ENCODE measurements at regions of chr2 and their contacts with region 1.

Region 1: GRCh38 chr2:37231241-37232130 is at the starts of genes CEBPZ and NDUFAF7:
- DNase-seq: peak; percentile 86 to 90
- ATAC-seq: peak; percentile 99
- H3K4me3 ChIP-seq: peak within 1 kb of the TSS; percentile 80 to 97 (median 87)
- H3K27ac ChIP-seq: peak within 1 kb of the TSS; percentile 91 to 98 (median 94)
- H3K4me1 ChIP-seq: peaks cover 29 to 31% of the 10 kb centered on the region in 2 donors
- H3K27me3 ChIP-seq: no peaks in the 10 kb centered on the region
- CTCF ChIP-seq: peak in 2 of 5 experiments; percentile 11 to 20
- POLR2A ChIP-seq: peak; percentile 68 to 71
- total RNA-seq, gene CEBPZ: 43.2 to 75.0 (median 51.9) TPM
- total RNA-seq, gene NDUFAF7: 13.7 to 24.0 (median 19.9) TPM

Region 2: GRCh38 chr2:36966370-36967235 is 264.9 kb before region 1 on chr2 and contains the start of gene STRN:
- in situ Hi-C with region 1: no loop called
- intact Hi-C with region 1: loop called (anchors 5 kb)
- DNase-seq: peak; percentile 90 to 96
- ATAC-seq: peak; percentile 88 to 91
- H3K4me3 ChIP-seq: peak within 1 kb of the TSS; percentile 70 to 97 (median 88)
- H3K27ac ChIP-seq: peak within 1 kb of the TSS; percentile 81 to 97 (median 90)
- H3K4me1 ChIP-seq: peaks cover 28% of the 10 kb centered on the region in 2 donors
- H3K27me3 ChIP-seq: no peaks in the 10 kb centered on the region
- CTCF ChIP-seq: peak in 1 of 5 experiments; percentile 32
- POLR2A ChIP-seq: peak; percentile 94 to 98
- total RNA-seq, gene STRN: 21.3 to 52.0 (median 38.5) TPM

Region 3: DNA sequence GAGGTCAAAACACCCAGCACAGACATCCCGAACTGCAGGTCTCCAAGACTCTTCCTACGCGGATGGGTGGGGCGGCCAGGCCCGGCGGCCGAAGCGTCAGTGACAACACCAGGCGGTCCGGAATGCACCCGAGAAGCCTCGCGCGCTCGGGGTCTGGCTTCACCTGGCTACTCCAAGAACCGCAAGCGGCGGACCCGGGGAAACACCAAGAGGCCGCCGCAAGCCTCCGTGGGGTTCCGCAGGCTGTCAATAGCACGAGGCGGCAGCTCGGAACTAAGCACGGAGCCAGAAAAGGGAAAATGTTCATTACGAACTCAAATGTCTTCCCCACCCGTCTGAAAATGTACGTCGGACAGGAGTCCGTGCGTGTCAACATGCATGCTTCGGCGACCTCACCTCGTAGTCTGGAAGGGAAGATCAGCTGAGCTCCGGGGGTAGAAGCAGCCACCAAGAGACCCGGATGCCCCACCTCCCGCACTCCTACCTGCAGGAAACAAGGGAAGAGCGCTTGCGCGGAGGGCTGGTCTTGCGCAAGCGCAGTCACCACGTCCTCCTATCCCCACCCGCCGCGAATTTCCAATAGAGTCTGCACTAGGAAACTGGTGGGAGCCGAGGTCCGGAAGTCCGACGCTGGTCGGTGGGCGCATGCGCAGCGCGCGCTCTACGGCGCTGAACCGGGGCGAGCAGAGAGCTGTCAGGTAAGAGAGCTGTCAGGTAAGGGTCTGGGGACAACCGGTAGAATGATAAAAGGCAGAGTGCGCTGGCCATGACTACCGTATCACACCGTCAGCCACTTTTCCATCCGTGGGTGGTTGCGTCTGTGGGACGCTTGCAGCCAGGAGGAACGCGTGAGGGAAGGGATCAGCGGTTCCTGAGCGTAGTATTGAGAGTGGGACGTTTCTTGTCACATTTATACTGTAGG is 147.4 kb before region 1 on chr2 and contains the starts of genes GPATCH11 and HEATR5B:
- in situ Hi-C with region 1: no loop called
- intact Hi-C with region 1: loop called (anchors 5 kb)
- DNase-seq: peak; percentile 95 to 96
- ATAC-seq: peak; percentile 99
- H3K4me3 ChIP-seq: peak within 1 kb of the TSS; percentile 65 to 96 (median 90)
- H3K27ac ChIP-seq: peak within 1 kb of the TSS; percentile 83 to 91 (median 84)
- H3K4me1 ChIP-seq: peaks cover 28 to 33% of the 10 kb centered on the region in 2 donors
- H3K27me3 ChIP-seq: no peaks in the 10 kb centered on the region
- CTCF ChIP-seq: no peak
- POLR2A ChIP-seq: peak; percentile 55
- total RNA-seq, gene GPATCH11: 2.5 to 3.7 (median 3.0) TPM
- total RNA-seq, gene HEATR5B: 6.8 to 10.0 (median 9.8) TPM

Region 4: GRCh38 chr2:37196320-37197195 is 34.9 kb before region 1 on chr2 and contains the start of gene CEBPZOS:
- in situ Hi-C with region 1: no loop called
- intact Hi-C with region 1: loop called (anchors 2 kb)
- DNase-seq: peak; percentile 63 to 76
- ATAC-seq: peak; percentile 92 to 94
- H3K4me3 ChIP-seq: peak within 1 kb of the TSS; percentile 76 to 97 (median 86)
- H3K27ac ChIP-seq: peak within 1 kb of the TSS; percentile 82 to 96 (median 92)
- H3K4me1 ChIP-seq: peaks cover 11 to 12% of the 10 kb centered on the region in 2 donors
- H3K27me3 ChIP-seq: no peaks in the 10 kb centered on the region
- CTCF ChIP-seq: no peak
- POLR2A ChIP-seq: peak; percentile 76 to 77
- total RNA-seq, gene CEBPZOS: 19.9 to 33.1 (median 24.1) TPM

Region 5: GRCh38 chr2:37324786-37325624 is 93.5 kb after region 1 on chr2 and contains the start of gene PRKD3:
- in situ Hi-C with region 1: no loop called
- intact Hi-C with region 1: loop called (anchors 2 kb)
- DNase-seq: peak in 1 of 2 donors; percentile 28
- ATAC-seq: peak; percentile 83 to 84
- H3K4me3 ChIP-seq: peak within 1 kb of the TSS; percentile 71 to 88 (median 80)
- H3K27ac ChIP-seq: peak within 1 kb of the TSS; percentile 79 to 93 (median 90)
- H3K4me1 ChIP-seq: peaks cover 24 to 30% of the 10 kb centered on the region in 2 donors
- H3K27me3 ChIP-seq: no peaks in the 10 kb centered on the region
- CTCF ChIP-seq: no peak
- POLR2A ChIP-seq: peak; percentile 74 to 78
- total RNA-seq, gene PRKD3: 11.0 to 34.4 (median 14.9) TPM

Region 6: GRCh38 chr2:37376421-37377186 is 145.1 kb after region 1 on chr2:
- in situ Hi-C with region 1: no loop called
- intact Hi-C with region 1: loop called (anchors 5 kb)
- DNase-seq: peak; percentile 83 to 87
- ATAC-seq: peak; percentile 95
- H3K4me3 ChIP-seq: peak overlapping the region in 2 of 4 donors; percentile 25 to 34
- H3K27ac ChIP-seq: peak overlapping the region; percentile 78 to 90 (median 82)
- H3K4me1 ChIP-seq: peaks cover 13 to 24% of the 10 kb centered on the region in 2 donors
- H3K27me3 ChIP-seq: no peaks in the 10 kb centered on the region
- CTCF ChIP-seq: no peak
- POLR2A ChIP-seq: no peak